ENCODE measurements at regions of chr7 and their contacts with region 1.

Region 1: GRCh38 chr7:149284850-149285626 is 23.0 kb downstream of the ZNF783 start:
- DNase-seq: peak; percentile 96 to 99 (median 98)
- ATAC-seq: peak; percentile 93
- H3K4me3 ChIP-seq: peak overlapping the region; percentile 65
- H3K4me3 Mint-ChIP-seq: peak overlapping the region; percentile 92
- H3K27ac ChIP-seq: peak overlapping the region; percentile 21 to 63
- H3K27ac Mint-ChIP-seq: peak overlapping the region; percentile 90
- H3K4me1 ChIP-seq: peaks cover 47% of the 10 kb centered on the region
- H3K4me1 Mint-ChIP-seq: peaks cover 44% of the 10 kb centered on the region
- H3K27me3 ChIP-seq: no peaks in the 10 kb centered on the region
- H3K27me3 Mint-ChIP-seq: no peaks in the 10 kb centered on the region
- CTCF ChIP-seq: peak; percentile 13

Region 2: GRCh38 chr7:149140831-149141230 is 144.2 kb before region 1 on chr7:
- CTCF ChIA-PET with region 1: no interaction called
- POLR2A ChIA-PET with region 1: no interaction called
- intact Hi-C with region 1: no loop called
- DNase-seq: peak in 1 of 14 experiments; percentile 33
- ATAC-seq: no peak
- H3K4me3 ChIP-seq: no peak overlapping the region
- H3K4me3 Mint-ChIP-seq: no peak overlapping the region
- H3K27ac ChIP-seq: no peak overlapping the region
- H3K27ac Mint-ChIP-seq: no peak overlapping the region
- H3K4me1 ChIP-seq: peaks cover 11% of the 10 kb centered on the region
- H3K4me1 Mint-ChIP-seq: peaks cover 16% of the 10 kb centered on the region
- H3K27me3 ChIP-seq: no peaks in the 10 kb centered on the region
- H3K27me3 Mint-ChIP-seq: no peaks in the 10 kb centered on the region
- CTCF ChIP-seq: no peak

Region 3: DNA sequence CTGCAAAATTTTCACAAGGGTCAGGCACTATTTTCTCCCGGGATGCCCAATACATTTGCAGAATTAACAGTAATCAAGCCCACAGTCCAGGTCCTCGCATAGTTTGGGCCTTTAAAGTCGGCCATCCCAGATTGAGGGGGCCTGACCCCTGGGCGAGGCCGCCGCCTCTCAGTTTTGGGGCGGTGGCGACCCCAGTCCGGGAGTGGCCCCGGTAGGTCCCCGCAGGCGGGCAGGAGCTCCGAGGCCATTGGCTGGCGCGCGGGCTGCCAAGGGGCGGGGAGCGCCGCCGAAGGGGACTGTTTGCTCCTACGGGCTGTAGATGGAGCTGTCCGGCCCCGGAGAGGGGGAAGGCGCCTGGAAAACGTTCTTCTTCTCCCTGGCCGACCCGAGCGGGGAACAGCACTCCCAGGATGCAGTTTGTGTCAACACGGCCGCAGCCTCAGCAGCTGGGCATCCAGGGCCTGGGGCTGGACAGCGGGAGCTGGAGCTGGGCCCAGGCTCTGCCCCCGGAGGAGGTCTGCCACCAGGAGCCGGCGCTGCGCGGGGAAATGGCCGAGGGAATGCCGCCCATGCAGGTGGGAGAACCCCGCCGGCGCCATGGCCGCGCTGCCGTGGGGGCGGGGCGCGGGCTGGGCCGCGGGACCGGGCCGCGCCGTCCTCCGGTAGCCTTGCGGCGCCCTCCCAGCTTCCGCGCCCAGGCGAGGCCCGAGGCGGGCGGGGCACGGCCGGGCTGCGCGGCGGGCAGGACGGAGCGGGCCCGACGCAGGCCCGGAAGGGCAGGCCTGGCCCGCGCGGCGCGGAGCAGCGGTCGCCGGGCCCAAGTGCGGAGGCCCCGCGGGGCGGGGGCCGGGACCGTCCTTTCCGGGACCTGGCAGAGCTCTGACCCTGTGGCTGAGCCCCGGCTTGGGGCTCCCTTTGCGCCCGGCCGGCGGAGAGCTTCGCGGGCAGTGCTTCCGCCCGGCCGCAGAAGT is 89.6 kb before region 1 on chr7 and contains the start of gene ZNF282:
- CTCF ChIA-PET with region 1: interaction called, 6 read pairs
- POLR2A ChIA-PET with region 1: interaction called, 17 read pairs
- intact Hi-C with region 1: no loop called
- DNase-seq: peak; percentile 32 to 83 (median 59)
- ATAC-seq: peak; percentile 79
- H3K4me3 ChIP-seq: peak within 1 kb of the TSS; percentile 90
- H3K4me3 Mint-ChIP-seq: peak within 1 kb of the TSS; percentile 96
- H3K27ac ChIP-seq: peak within 1 kb of the TSS; percentile 16 to 47
- H3K27ac Mint-ChIP-seq: peak within 1 kb of the TSS; percentile 89
- H3K4me1 ChIP-seq: peaks cover 25% of the 10 kb centered on the region
- H3K4me1 Mint-ChIP-seq: peaks cover 36% of the 10 kb centered on the region
- H3K27me3 ChIP-seq: no peaks in the 10 kb centered on the region
- H3K27me3 Mint-ChIP-seq: no peaks in the 10 kb centered on the region
- CTCF ChIP-seq: peak; percentile 54
- total RNA-seq, gene ZNF282: 13.3 to 15.6 TPM

Region 4: GRCh38 chr7:149261829-149262617 is 23.0 kb before region 1 on chr7 and contains the start of gene ZNF783:
- CTCF ChIA-PET with region 1: interaction called, 56 read pairs
- POLR2A ChIA-PET with region 1: interaction called, 144 read pairs
- intact Hi-C with region 1: loop called (anchors 1 to 2 kb)
- DNase-seq: peak; percentile 75 to 97 (median 83)
- ATAC-seq: peak; percentile 91
- H3K4me3 ChIP-seq: peak within 1 kb of the TSS; percentile 56
- H3K4me3 Mint-ChIP-seq: peak within 1 kb of the TSS; percentile 89
- H3K27ac ChIP-seq: peak within 1 kb of the TSS; percentile 41 to 42
- H3K27ac Mint-ChIP-seq: peak within 1 kb of the TSS; percentile 80
- H3K4me1 ChIP-seq: peaks cover 28% of the 10 kb centered on the region
- H3K4me1 Mint-ChIP-seq: peaks cover 38% of the 10 kb centered on the region
- H3K27me3 ChIP-seq: no peaks in the 10 kb centered on the region
- H3K27me3 Mint-ChIP-seq: no peaks in the 10 kb centered on the region
- CTCF ChIP-seq: peak; percentile 57
- total RNA-seq, gene ZNF783: 27.6 to 29.0 TPM

Region 5: GRCh38 chr7:149310113-149310836 is 25.2 kb after region 1 on chr7:
- CTCF ChIA-PET with region 1: interaction called, 3 read pairs
- POLR2A ChIA-PET with region 1: interaction called, 15 read pairs
- intact Hi-C with region 1: no loop called
- DNase-seq: peak in 3 of 14 experiments; percentile 46 to 57 (median 48)
- ATAC-seq: peak; percentile 56
- H3K4me3 ChIP-seq: no peak overlapping the region
- H3K4me3 Mint-ChIP-seq: no peak overlapping the region
- H3K27ac ChIP-seq: no peak overlapping the region
- H3K27ac Mint-ChIP-seq: peak overlapping the region; percentile 3
- H3K4me1 ChIP-seq: no peaks in the 10 kb centered on the region
- H3K4me1 Mint-ChIP-seq: no peaks in the 10 kb centered on the region
- H3K27me3 ChIP-seq: no peaks in the 10 kb centered on the region
- H3K27me3 Mint-ChIP-seq: no peaks in the 10 kb centered on the region
- CTCF ChIP-seq: peak; percentile 37

Region 6: GRCh38 chr7:149422129-149422913 is 137.3 kb after region 1 on chr7:
- CTCF ChIA-PET with region 1: interaction called, 5 read pairs
- POLR2A ChIA-PET with region 1: interaction called, 14 read pairs
- intact Hi-C with region 1: loop called in 1 of 2 experiments (anchors 5 kb)
- DNase-seq: peak; percentile 33 to 93 (median 69)
- ATAC-seq: peak; percentile 92
- H3K4me3 ChIP-seq: peak overlapping the region; percentile 75
- H3K4me3 Mint-ChIP-seq: peak overlapping the region; percentile 70
- H3K27ac ChIP-seq: peak overlapping the region; percentile 16 to 76
- H3K27ac Mint-ChIP-seq: peak overlapping the region; percentile 68
- H3K4me1 ChIP-seq: peaks cover 17% of the 10 kb centered on the region
- H3K4me1 Mint-ChIP-seq: no peaks in the 10 kb centered on the region
- H3K27me3 ChIP-seq: no peaks in the 10 kb centered on the region
- H3K27me3 Mint-ChIP-seq: no peaks in the 10 kb centered on the region
- CTCF ChIP-seq: peak; percentile 29

Region 7: DNA sequence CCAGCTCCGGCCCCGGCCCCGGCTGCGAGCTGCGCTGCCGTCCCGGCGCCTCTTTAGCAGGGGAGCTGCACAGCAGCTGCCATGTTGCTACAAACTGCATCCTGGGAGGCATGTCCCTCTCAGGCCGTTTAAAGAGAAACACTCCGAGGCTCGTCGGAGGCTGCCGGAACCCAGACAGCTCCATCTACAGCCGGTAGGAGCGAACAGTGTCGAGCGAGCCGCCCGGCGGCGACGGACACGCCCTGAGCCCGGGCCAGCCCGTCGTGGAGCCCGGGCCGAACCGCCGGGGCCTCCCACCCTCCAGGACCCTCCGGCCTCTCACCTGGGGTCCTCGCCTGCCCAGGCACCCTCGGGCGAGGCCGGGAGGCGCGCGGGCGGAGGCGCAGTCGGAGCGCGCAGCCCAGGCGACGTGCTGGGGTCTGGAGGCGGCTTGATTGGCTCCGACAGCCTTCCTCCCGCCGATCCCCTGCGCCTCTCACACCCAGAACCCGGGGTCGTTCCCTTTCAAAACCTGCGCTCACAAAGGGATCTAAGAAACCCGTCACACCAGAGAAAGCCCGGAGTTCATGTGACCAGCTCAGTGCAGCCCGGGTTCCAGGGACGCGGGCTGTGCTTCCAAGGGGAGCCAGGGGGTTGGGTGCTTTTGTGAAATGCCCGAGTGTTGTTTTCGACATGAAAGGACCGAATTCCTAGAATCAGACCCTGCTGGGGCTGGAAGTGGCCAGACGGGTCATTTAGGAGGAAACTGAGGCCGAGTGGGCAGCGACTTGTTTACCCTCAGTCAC is 175.6 kb after region 1 on chr7 and contains the start of gene ZNF777:
- CTCF ChIA-PET with region 1: no interaction called
- POLR2A ChIA-PET with region 1: interaction called, 17 read pairs
- intact Hi-C with region 1: no loop called
- DNase-seq: peak; percentile 70 to 92 (median 78)
- ATAC-seq: peak; percentile 99
- H3K4me3 ChIP-seq: peak within 1 kb of the TSS; percentile 74
- H3K4me3 Mint-ChIP-seq: peak within 1 kb of the TSS; percentile 92
- H3K27ac ChIP-seq: peak within 1 kb of the TSS in 1 of 2 donors; percentile 52
- H3K27ac Mint-ChIP-seq: peak within 1 kb of the TSS; percentile 70
- H3K4me1 ChIP-seq: peaks cover 25% of the 10 kb centered on the region
- H3K4me1 Mint-ChIP-seq: peaks cover 33% of the 10 kb centered on the region
- H3K27me3 ChIP-seq: peaks cover 0 to 5% of the 10 kb centered on the region in 2 experiments
- H3K27me3 Mint-ChIP-seq: peaks cover 15% of the 10 kb centered on the region
- CTCF ChIP-seq: peak; percentile 49
- total RNA-seq, gene ZNF777: 14.5 to 14.8 TPM

Measured in CD4-positive, alpha-beta T cell (primary cell).